Gastrocnemius medialis (tissue), 4 donors: ENCODE measurements at regions of chr19 and their contacts with region 1.

Region 1: DNA sequence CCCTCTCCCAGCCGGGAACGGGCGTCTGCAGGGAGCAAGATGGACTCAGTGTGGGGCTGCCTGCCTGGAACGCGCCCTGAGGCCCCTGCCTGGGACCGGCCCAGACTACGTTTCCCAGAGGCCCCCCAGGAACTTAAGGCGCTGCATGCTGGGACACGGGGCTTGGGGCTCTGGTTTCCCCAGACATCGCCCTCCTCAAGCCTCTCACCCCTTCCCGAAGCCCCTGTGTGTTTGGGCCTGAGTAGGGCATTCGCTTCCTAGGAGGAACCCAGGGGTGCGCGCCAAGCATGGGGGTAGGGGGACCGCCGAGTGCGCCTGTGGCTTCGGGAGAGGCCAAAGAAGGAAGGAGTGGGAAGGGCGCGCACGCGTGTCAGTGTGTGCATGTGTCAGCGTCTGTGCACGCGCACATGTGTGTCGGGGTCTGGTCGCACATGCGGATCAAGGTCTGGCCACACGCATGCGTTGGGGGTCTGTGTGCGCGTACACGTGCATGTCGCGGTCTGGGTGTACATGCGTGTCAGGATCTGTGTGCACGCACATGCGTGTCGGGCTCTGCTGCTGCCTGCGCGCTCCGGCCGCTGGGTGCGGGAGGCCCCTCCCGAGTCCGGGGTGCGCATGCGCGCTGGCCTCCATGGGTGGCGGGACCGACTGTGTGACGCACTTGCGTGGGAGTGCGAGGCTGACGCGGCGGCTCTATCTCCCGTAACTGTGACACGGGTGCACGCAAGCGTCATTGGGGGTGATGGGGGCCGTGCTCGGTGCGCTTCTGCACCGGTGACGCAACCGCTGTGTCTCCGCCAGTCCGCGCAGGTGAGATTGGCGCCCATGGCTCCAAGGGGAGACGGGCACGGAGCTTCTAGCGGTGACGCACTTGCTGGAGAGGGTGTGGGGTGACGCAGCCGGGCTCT is 16.2 kb downstream of the ZNF331 start:
- DNase-seq: peak; percentile 46 to 78
- ATAC-seq: peak; percentile 74 to 87
- H3K4me3 ChIP-seq: peak overlapping the region; percentile 54 to 71 (median 66)
- H3K27ac ChIP-seq: peak overlapping the region; percentile 80 to 87 (median 83)
- H3K4me1 ChIP-seq: peaks cover 2 to 3% of the 10 kb centered on the region in 2 donors
- H3K27me3 ChIP-seq: no peaks in the 10 kb centered on the region
- CTCF ChIP-seq: no peak
- POLR2A ChIP-seq: peak; percentile 58 to 68

Region 2: DNA sequence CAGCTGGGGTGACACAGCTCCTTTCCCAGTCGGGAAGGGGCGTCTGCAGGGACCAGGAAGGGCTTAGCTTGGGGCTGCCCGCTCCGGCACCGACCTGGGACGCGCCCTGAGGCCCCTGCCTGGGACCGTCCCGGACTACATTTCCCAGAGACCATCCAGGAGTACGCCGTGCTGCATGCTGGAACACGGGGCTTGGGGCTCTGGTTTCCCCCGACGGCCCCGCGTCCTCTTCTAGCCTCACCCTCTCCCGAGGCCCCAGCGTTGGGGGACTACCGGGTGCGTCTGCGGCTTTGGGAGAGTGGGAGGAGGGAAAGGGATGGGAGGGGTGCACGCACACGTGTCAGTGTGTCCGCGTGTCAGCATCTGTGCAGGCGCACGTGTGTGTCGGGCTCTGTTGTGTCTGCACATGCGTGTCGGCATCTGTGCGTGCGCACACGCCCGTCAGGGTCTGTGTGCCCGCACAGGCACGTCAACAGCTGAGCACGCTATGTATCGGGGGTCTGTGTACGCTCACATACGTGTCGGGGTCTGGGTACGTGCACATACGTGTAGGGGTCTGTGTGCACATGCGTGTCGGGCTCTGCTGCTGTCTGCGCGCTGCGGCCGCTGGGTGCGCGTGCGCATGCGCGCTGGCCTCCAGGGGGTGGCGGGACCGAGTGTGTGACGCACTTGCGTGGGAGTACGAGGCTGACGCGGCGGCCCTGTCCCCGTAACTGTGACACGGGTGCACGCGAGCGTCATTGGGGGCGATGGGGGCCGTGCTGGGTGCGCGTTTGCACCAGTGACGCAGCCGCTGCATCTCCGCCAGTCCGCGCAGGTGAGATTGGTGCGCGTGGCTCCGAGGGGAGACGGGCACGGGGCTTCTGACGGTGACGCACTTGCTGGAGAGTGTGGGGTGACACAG is 16.4 kb before region 1 on chr19 and contains the start of gene ZNF331:
- in situ Hi-C with region 1: no loop called
- intact Hi-C with region 1: loop called (anchors 2 kb)
- DNase-seq: peak; percentile 53 to 77
- ATAC-seq: peak; percentile 85 to 92
- H3K4me3 ChIP-seq: peak within 1 kb of the TSS; percentile 44 to 91 (median 75)
- H3K27ac ChIP-seq: peak within 1 kb of the TSS; percentile 67 to 90 (median 86)
- H3K4me1 ChIP-seq: peaks cover 0 to 3% of the 10 kb centered on the region in 2 donors
- H3K27me3 ChIP-seq: no peaks in the 10 kb centered on the region
- CTCF ChIP-seq: peak; percentile 47 to 71 (median 55)
- POLR2A ChIP-seq: peak; percentile 64 to 69
- total RNA-seq, gene ZNF331: 4.8 to 12.6 (median 7.0) TPM